CD8-positive, alpha-beta memory T cell (primary cell): ENCODE measurements at regions of chr15 and their contacts with region 1.

Region 1: GRCh38 chr15:74787251-74788041 is 5.6 kb downstream of the CSK start:
- DNase-seq: peak; percentile 88 to 99 (median 96)
- H3K4me3 ChIP-seq: peak overlapping the region; percentile 80
- H3K4me3 Mint-ChIP-seq: peak overlapping the region; percentile 85 to 97 (median 91)
- H3K27ac ChIP-seq: peak overlapping the region; percentile 69
- H3K27ac Mint-ChIP-seq: peak overlapping the region; percentile 92 to 99 (median 98)
- H3K4me1 ChIP-seq: peaks cover 75% of the 10 kb centered on the region
- H3K4me1 Mint-ChIP-seq: peaks cover 77 to 89% (median 84%) of the 10 kb centered on the region in 3 donors
- H3K27me3 ChIP-seq: no peaks in the 10 kb centered on the region
- H3K27me3 Mint-ChIP-seq: peaks cover 0 to 7% of the 10 kb centered on the region in 2 donors

Region 2: DNA sequence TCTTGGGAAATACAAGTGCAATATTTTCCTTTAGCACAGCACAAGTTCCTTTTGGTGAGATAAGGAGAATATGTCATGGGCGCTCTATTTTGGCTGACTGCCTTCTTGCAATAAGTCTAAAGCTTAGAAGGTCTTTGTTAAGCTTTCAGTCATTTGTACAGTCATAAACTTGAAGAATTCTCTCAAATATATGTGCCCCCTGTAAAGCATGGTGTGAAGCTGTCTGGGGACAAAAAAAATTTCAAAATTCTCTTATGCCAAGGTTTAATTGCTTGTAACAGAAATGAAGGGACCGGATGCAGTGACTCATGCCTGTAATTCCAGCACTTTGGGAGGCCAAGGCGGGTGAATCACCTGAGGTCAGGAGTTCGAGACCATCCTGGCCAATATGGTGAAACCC is 268.1 kb before region 1 on chr15:
- CTCF ChIA-PET with region 1: no interaction called
- POLR2A ChIA-PET with region 1: no interaction called
- DNase-seq: no peak
- H3K4me3 ChIP-seq: no peak overlapping the region
- H3K4me3 Mint-ChIP-seq: no peak overlapping the region
- H3K27ac ChIP-seq: no peak overlapping the region
- H3K27ac Mint-ChIP-seq: no peak overlapping the region
- H3K4me1 ChIP-seq: no peaks in the 10 kb centered on the region
- H3K4me1 Mint-ChIP-seq: no peaks in the 10 kb centered on the region
- H3K27me3 ChIP-seq: no peaks in the 10 kb centered on the region
- H3K27me3 Mint-ChIP-seq: no peaks in the 10 kb centered on the region

Region 3: GRCh38 chr15:74573987-74574386 is 213.5 kb before region 1 on chr15:
- CTCF ChIA-PET with region 1: no interaction called
- POLR2A ChIA-PET with region 1: no interaction called
- DNase-seq: no peak
- H3K4me3 ChIP-seq: no peak overlapping the region
- H3K4me3 Mint-ChIP-seq: no peak overlapping the region
- H3K27ac ChIP-seq: no peak overlapping the region
- H3K27ac Mint-ChIP-seq: peak overlapping the region in 1 of 8 donors; percentile 57
- H3K4me1 ChIP-seq: no peaks in the 10 kb centered on the region
- H3K4me1 Mint-ChIP-seq: peaks cover 4 to 18% (median 13%) of the 10 kb centered on the region in 3 donors
- H3K27me3 ChIP-seq: no peaks in the 10 kb centered on the region
- H3K27me3 Mint-ChIP-seq: no peaks in the 10 kb centered on the region

Region 4: GRCh38 chr15:74799856-74800547 is 12.6 kb after region 1 on chr15:
- CTCF ChIA-PET with region 1: interaction called, 1,086 read pairs
- POLR2A ChIA-PET with region 1: interaction called, 89 read pairs
- DNase-seq: peak; percentile 81 to 91 (median 85)
- H3K4me3 ChIP-seq: peak overlapping the region; percentile 32
- H3K4me3 Mint-ChIP-seq: peak overlapping the region in 6 of 7 donors; percentile 19 to 40 (median 26)
- H3K27ac ChIP-seq: peak overlapping the region; percentile 65
- H3K27ac Mint-ChIP-seq: peak overlapping the region; percentile 79 to 97 (median 94)
- H3K4me1 ChIP-seq: peaks cover 57% of the 10 kb centered on the region
- H3K4me1 Mint-ChIP-seq: peaks cover 42 to 53% (median 48%) of the 10 kb centered on the region in 3 donors
- H3K27me3 ChIP-seq: no peaks in the 10 kb centered on the region
- H3K27me3 Mint-ChIP-seq: no peaks in the 10 kb centered on the region

Region 5: DNA sequence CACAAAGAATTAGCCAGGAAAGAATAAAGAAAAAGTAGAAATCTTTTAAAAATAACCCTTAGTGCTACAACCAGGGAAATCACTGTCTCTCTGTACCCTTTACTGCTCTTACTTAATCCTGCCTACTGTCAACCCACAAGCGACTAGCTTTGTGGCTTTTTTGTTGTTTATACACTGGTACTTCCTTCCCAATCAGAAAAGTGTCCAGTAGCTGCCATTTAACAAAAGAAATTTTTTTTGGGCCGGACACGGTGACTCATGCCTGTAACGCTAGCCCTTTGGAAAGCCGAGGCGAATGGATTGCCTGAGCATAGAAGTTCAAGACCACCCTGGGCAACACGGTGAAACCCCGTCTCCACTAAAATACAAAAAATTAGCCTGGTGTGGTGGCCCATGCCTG is 133.0 kb after region 1 on chr15:
- CTCF ChIA-PET with region 1: no interaction called
- POLR2A ChIA-PET with region 1: no interaction called
- DNase-seq: no peak
- H3K4me3 ChIP-seq: no peak overlapping the region
- H3K4me3 Mint-ChIP-seq: no peak overlapping the region
- H3K27ac ChIP-seq: no peak overlapping the region
- H3K27ac Mint-ChIP-seq: peak overlapping the region in 2 of 8 donors; percentile 4 to 18
- H3K4me1 ChIP-seq: no peaks in the 10 kb centered on the region
- H3K4me1 Mint-ChIP-seq: peaks cover 0 to 5% (median 0%) of the 10 kb centered on the region in 3 donors
- H3K27me3 ChIP-seq: no peaks in the 10 kb centered on the region
- H3K27me3 Mint-ChIP-seq: no peaks in the 10 kb centered on the region